ENCODE measurements at regions of chr15 and their contacts with region 1.

Region 1: DNA sequence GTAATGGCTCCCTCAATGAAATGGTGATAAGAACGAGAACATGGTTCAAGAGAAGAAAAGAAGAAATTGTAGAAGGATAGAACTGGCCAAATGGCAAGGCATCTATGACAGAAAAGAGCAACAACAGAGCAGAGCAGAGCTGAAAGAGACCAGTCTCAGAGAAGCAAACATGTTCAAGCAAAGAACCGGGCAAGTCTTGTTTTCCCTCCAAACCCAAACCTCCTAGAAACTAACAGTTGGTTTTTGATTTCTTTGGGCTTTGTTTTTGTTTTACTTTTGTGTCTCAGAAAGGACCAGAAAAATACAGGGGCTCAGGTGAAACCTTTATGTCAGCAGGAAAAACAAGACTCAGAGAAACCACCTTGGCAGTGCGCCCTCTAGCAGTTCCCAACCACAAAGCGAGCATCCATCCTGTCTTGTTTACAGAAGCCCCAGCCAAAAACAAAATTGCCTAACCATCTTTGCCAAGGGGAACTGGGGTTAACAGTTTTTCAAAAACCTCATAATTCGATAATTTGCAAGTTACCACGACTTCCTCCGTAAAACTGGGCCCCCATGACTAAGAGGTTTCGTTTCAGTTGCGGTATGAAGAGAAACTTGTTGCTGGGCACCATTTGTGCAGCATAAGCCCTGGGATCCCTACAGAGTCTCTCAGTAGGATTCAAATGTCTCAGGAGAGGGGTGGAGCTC is 159.2 kb upstream of the SLC24A5 start:
- DNase-seq: peak; percentile 53
- CTCF ChIP-seq: no peak

Region 2: DNA sequence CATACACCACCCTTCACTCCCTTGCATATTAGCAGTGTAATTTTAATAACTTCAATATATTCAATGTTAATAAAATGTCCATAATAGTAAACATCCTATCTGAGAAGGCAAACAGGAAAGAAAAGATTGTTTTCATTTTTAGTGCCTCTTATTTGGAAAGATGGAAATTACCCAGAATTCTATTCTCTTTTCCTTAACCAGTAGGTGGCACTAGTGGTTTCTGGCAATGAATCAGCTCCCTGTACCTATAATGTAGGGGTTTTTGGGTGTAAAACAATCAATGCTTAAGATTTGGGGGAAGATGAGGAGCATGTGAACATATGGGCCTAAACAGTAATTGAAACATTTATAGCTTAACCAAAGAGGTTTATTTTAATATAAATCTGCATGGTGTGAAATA is 249.9 kb before region 1 on chr15:
- CTCF ChIA-PET with region 1: interaction called, 11 read pairs
- POLR2A ChIA-PET with region 1: no interaction called
- DNase-seq: peak; percentile 37
- CTCF ChIP-seq: peak; percentile 52